ENCODE measurements at regions of chr18 and their contacts with region 1.

Region 1: GRCh38 chr18:45384137-45384961 is 230.9 kb upstream of the SLC14A2 start:
- DNase-seq: no peak
- H3K4me3 ChIP-seq: no peak overlapping the region
- CTCF ChIP-seq: peak; percentile 62

Region 2: DNA sequence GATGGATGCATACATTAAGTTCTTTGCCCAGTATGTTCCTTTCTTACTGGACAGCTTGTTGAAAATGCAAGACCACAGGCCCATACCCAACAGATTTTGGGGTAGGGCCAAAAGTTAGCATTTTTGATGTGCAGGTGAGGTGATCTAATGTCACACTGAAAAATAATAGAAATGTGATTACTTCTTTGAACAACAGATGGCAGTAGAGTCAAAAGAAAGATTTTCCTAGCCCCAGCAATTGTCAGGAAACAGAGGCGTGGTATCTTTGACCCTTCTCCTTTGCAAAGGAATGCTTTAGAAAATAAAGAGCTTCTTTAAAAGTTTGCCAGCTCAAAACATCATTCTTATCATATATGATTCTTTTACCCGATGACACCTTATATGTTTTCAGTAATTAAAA is 1763.4 kb before region 1 on chr18:
- CTCF ChIA-PET with region 1: interaction called, 10 read pairs
- POLR2A ChIA-PET with region 1: no interaction called
- DNase-seq: no peak
- H3K4me3 ChIP-seq: no peak overlapping the region
- CTCF ChIP-seq: peak; percentile 16

Region 3: GRCh38 chr18:44901283-44901682 is 483.1 kb before region 1 on chr18:
- CTCF ChIA-PET with region 1: interaction called, 27 read pairs
- POLR2A ChIA-PET with region 1: no interaction called
- DNase-seq: no peak
- H3K4me3 ChIP-seq: no peak overlapping the region
- CTCF ChIP-seq: peak; percentile 8

Region 4: DNA sequence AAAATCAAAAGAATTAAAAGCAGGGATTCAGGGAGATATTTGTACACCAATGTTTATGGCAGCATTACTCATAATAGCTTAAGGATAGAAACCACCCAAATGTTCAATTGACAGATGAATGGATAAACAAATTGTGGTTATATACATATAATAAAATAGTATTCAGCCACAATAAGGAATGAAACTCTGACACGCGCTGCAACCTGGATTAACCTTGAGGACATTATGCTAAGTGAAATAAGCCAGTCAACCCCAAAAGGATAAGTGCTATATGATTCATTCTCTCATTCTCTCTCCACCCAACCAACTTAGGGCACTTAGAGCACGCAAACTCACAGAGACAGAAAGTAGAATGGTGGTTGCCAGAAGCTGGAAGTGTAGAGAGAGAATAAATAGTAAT is 14.1 kb after region 1 on chr18:
- CTCF ChIA-PET with region 1: interaction called, 11 read pairs
- POLR2A ChIA-PET with region 1: no interaction called
- DNase-seq: no peak
- H3K4me3 ChIP-seq: no peak overlapping the region
- CTCF ChIP-seq: no peak

Region 5: DNA sequence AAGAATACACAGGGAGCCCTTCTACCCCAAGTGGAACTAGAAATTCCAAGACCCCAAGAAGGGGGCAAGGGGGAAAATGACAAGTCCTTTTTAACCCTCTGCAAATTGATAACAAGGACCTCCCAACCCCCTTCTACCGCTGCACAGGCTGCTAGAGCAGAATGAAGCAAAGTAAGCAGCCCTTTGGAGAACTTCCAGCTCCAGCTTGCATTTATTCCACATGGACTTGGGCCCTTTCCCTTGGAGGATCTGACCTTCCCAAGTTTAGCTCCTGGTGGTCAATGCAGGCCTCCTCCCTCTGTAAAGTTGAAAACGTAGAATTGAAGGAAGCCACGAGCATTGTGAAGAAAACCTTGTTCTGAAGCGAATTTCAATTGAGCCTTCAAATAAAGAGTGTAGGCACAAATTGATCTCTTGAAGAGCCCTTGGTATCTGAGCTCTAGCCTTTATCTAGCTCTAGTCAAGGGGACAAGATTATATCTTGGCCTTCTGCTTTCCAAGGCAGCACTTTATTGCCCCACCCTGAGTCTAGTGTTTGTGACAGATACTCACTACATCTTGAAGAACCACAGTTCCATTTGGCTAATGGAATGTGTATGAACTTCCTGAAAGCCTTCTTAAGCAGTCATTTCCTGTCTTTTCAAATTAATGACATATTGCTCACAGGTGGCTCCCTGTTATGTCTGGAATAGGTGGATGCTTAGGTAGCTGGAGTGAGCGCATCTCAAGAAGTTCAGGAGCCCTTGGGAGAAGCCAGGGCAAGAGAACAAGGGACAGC is 268.1 kb after region 1 on chr18:
- CTCF ChIA-PET with region 1: no interaction called
- POLR2A ChIA-PET with region 1: no interaction called
- DNase-seq: no peak
- H3K4me3 ChIP-seq: no peak overlapping the region
- CTCF ChIP-seq: no peak